GM18951 (cell line): ENCODE measurements at regions of chr10 and their contacts with region 1.

Region 1: DNA sequence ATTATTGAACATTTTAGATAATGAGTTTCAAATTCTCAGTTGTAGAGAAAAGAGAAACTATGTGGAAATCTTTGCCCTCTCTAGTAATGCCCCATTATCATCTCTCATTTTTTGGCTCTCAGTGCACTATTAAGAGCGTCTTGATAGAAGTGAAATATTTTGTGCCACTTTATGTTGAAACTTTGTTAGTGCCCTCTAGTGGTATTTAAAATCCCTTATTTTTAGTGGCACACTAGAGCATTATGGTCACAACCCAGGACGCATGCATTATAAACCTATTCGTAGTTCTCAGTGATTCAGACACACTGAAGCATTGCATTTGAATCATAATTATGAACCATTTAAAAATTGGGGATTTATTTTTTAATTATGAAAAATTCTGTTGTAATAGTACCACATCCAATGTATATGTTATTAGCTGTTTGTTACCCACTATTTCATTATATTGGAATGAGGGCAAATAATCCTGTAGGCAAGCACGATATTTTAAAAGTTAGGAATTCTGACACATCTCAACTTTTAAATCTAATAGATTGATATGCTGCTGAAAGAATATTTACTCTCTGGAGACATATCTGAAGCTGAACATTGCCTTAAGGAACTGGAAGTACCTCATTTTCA is 21.9 kb downstream of the PDCD4 start:
- POLR2A ChIP-seq: no peak

Region 2: DNA sequence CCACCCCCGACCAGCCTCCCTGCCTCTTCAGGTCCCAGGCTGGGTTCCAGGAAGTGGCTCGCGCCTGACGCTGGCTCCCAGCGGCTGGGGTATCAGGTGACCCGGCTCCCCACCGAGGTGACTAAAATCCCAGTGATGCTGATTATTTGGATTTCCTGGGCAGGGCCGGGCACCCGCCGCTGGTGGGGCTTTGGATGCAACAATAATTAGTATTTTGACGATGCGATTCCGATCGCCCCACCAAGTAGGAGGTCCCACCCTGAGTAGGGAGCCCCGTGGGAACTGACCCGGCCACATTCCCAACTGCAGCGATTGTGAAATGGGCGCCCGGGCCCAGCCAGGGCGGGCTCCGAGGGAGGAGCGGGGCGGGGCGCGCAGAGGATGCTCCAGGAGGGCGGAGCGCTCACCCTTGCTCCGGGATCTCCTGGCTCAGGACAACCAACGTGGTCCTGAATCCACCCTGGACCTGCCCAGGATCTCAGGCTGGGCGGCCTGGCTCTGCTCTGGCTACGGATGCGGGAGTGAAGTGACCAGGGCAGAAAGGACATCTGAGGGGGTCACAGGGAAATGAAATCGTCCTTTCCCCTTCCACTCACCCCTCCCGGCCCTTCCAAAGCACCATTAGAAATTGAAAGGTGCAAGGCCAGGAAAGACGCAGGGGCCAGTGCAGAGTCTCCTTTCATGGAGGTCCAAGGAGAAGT is 363.4 kb before region 1 on chr10:
- in situ Hi-C with region 1: no loop called
- POLR2A ChIP-seq: no peak

Region 3: DNA sequence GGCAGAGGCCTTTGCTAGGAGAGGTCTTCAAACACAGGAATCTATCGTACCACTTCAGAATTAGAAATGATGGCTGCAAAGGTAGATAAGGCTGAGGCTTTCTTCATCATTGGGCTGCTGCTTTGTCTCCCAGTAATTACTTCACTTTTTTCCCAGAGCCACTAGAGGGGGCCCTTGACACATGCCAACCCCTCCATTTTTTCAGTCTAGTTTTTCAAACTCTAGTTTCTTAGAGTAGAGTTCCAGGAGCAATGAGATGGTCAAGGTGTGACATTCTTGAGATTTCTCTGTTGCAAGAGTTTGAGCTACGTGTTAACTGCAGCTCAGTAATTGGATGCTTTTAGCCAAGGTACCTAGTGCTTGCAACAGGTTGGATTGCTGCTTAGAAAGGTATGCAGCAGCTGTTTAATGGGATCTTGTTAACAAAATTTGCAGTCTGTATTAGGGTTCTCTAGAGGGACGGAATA is 283.3 kb before region 1 on chr10:
- in situ Hi-C with region 1: loop called (anchors 25 kb)
- POLR2A ChIP-seq: no peak

Region 4: DNA sequence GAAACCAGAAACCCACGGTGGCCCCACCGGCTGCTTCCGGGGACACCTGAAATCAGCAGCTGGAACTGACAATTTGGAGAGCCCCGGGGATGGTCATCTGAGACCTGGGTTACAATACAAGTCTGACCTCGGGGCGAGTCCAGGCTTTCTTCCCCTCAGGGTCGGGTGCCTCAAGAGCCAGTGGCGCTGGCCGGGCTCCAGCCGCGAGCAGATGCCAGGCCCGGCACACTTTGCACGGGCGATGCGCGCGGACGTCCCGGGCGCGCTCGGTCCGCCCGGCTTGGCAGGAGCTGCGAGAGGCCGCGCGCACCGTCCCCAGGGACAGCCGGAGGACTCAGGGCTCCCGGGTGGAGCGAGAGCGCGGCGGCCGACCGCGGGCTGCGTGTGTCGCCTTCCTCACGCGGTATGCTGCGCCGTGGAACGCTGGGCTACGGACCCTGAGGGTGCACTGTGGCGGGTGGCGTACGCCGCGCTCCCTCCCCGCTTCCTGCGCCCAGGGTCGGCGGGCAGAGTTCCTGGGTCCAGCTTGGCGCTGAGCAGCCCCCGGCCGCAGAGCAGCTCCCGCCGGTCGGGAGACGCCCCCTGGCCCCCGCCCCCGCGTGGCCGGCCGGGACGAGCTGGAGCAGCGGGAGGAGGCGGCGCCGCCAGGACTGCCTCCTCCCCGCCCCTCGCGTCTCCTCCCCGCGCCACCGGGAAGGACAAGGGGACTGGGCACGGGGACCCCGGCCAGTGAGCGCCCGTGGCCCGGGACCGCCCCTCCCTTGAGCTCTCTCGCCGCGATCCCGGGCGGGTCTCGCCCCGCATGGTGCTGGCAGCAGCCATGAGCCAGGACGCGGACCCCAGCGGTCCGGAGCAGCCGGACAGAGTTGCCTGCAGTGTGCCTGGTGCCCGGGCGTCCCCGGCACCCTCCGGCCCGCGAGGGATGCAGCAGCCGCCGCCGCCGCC is 249.7 kb before region 1 on chr10 and contains the start of gene RBM20:
- in situ Hi-C with region 1: no loop called
- POLR2A ChIP-seq: no peak

Region 5: DNA sequence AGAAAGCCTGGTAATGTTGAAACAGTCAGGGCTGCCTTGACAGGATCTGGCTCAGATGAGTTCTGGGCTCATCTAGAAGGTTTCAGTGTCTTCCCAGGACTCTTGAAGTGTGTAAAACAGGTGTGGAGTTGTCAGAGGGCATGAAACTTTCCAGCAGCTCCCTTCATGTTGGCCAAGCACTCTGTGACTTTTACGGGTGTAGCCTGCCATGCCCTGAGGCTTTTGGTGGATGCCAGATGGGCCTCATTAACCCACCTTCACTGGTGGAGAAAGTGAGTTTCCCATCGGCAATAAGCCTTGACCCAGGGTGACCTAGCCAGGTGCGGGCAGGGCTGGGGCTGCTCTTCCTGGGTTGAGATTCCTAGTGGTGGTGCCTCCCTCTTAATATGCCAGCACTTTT is 88.3 kb before region 1 on chr10:
- in situ Hi-C with region 1: loop called (anchors 5 kb)
- POLR2A ChIP-seq: no peak